H1 (cell line): ENCODE measurements at regions of chr10 and their contacts with region 1.

Region 1: GRCh38 chr10:95693668-95694534 is at the start of gene TCTN3:
- DNase-seq: peak; percentile 95 to 97
- H3K4me3 ChIP-seq: peak within 1 kb of the TSS; percentile 65 to 98 (median 82)
- H3K27ac ChIP-seq: peak within 1 kb of the TSS; percentile 82
- H3K4me1 ChIP-seq: peaks cover 0 to 3% (median 1%) of the 10 kb centered on the region in 4 experiments; a peak in 2 of 7 replicates
- H3K27me3 ChIP-seq: no peaks in the 10 kb centered on the region
- CTCF ChIP-seq: peak; percentile 99 to 100 (median 99)
- EP300 ChIP-seq: peak in 1 of 2 experiments; percentile 79; a peak in 1 of 3 replicates
- POLR2A ChIP-seq: peak; percentile 64 to 90
- RAD21 ChIP-seq: peak; percentile 97 to 99
- total RNA-seq, gene TCTN3: 31.9 and 34.7 TPM in 2 replicates

Region 2: GRCh38 chr10:95664543-95664942 is 29.4 kb before region 1 on chr10:
- CTCF ChIA-PET with region 1: interaction called, 16 read pairs
- POLR2A ChIA-PET with region 1: interaction called, 3 read pairs
- DNase-seq: no peak
- H3K4me3 ChIP-seq: no peak overlapping the region
- H3K27ac ChIP-seq: no peak overlapping the region
- H3K4me1 ChIP-seq: no peaks in the 10 kb centered on the region
- H3K27me3 ChIP-seq: no peaks in the 10 kb centered on the region
- CTCF ChIP-seq: no peak
- EP300 ChIP-seq: no peak
- POLR2A ChIP-seq: no peak
- RAD21 ChIP-seq: no peak

Region 3: DNA sequence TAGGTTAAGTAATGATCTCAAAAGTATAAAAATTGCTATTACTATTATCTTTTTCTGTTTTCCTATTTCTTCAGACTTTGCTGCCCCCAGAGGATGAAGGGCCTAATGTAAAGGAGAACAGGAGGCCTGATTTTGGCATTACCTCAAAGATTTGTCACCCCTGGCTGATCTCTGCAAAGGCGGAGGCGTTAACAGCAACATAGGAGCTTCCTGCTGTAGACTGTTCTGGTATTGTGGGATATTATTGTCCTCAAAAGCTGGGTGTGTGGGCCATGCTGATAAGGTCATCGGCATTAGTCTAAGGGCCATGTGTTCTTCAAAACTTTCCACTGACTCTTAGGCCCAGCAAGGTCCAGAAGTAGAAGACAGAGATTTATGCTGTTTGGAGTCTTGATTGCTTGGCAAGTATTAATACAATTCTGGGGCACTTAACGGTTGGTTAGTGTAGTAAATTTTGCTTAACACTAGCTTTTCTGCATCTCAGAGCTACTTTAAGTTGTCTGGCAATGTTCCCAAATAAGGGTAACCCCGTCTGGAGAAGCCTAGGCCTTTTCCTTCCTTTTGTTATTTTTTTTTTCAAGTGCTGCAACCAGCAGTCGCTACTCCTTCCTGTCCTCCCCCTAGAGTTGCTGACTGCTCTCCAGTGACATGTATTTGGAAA is 48.0 kb after region 1 on chr10:
- CTCF ChIA-PET with region 1: interaction called, 10 read pairs
- POLR2A ChIA-PET with region 1: no interaction called
- DNase-seq: no peak
- H3K4me3 ChIP-seq: no peak overlapping the region
- H3K27ac ChIP-seq: no peak overlapping the region
- H3K4me1 ChIP-seq: no peaks in the 10 kb centered on the region
- H3K27me3 ChIP-seq: no peaks in the 10 kb centered on the region
- CTCF ChIP-seq: peak in 1 of 3 experiments; percentile 23; a peak in 1 of 4 replicates
- EP300 ChIP-seq: no peak
- POLR2A ChIP-seq: no peak
- RAD21 ChIP-seq: no peak

Region 4: GRCh38 chr10:95784279-95784913 is 90.5 kb after region 1 on chr10:
- CTCF ChIA-PET with region 1: interaction called, 10 read pairs
- POLR2A ChIA-PET with region 1: no interaction called
- DNase-seq: no peak
- H3K4me3 ChIP-seq: no peak overlapping the region
- H3K27ac ChIP-seq: no peak overlapping the region
- H3K4me1 ChIP-seq: no peaks in the 10 kb centered on the region; a peak in 1 of 7 replicates
- H3K27me3 ChIP-seq: no peaks in the 10 kb centered on the region
- CTCF ChIP-seq: no peak
- EP300 ChIP-seq: no peak
- POLR2A ChIP-seq: no peak
- RAD21 ChIP-seq: no peak

Region 5: DNA sequence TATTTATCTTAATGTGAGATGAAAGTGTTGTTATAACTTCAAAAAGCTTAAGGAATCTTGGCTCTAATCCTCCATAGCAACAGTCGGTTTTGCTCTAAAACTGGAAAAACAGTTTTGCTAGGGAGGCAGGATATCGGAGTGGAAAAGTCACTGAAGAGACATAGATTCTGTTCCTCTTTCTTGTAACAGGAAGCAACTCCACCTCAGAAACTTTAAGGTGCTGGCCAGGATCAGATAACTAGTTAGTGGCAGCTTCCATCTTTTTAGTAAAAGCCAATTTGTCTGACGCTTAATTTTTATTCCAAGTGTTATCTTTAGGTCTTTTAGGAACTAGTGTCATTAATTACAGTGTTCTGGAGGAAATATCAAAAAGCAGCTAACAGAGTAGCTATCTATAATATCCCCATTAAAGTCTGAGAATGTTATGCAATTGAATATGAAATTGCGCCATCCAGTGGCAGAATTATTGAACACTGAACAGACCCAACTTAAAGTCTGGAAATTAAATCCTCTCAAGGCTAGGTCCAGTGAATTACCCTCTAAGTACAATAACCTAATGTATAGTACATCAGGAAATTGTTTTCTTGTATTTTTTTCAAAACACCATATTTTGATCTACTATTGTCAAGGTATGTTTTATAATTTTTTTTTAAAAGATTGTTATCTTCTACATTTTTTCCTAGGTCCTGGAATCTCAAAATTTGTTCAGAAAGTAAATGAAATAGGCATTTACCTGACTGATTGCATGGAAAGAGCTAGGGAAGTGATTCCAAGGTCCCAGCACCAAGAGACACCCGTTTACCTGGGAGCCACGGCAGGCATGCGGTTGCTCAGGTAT is 148.0 kb after region 1 on chr10:
- CTCF ChIA-PET with region 1: interaction called, 238 read pairs
- POLR2A ChIA-PET with region 1: interaction called, 6 read pairs
- DNase-seq: peak in 1 of 2 experiments; percentile 15
- H3K4me3 ChIP-seq: no peak overlapping the region
- H3K27ac ChIP-seq: no peak overlapping the region
- H3K4me1 ChIP-seq: peaks cover 0 to 4% (median 2%) of the 10 kb centered on the region in 4 experiments; a peak in 2 of 7 replicates
- H3K27me3 ChIP-seq: no peaks in the 10 kb centered on the region
- CTCF ChIP-seq: peak in 2 of 3 experiments; percentile 54 to 58; a peak in 2 of 4 replicates
- EP300 ChIP-seq: no peak
- POLR2A ChIP-seq: no peak
- RAD21 ChIP-seq: peak; percentile 77 to 78

Region 6: DNA sequence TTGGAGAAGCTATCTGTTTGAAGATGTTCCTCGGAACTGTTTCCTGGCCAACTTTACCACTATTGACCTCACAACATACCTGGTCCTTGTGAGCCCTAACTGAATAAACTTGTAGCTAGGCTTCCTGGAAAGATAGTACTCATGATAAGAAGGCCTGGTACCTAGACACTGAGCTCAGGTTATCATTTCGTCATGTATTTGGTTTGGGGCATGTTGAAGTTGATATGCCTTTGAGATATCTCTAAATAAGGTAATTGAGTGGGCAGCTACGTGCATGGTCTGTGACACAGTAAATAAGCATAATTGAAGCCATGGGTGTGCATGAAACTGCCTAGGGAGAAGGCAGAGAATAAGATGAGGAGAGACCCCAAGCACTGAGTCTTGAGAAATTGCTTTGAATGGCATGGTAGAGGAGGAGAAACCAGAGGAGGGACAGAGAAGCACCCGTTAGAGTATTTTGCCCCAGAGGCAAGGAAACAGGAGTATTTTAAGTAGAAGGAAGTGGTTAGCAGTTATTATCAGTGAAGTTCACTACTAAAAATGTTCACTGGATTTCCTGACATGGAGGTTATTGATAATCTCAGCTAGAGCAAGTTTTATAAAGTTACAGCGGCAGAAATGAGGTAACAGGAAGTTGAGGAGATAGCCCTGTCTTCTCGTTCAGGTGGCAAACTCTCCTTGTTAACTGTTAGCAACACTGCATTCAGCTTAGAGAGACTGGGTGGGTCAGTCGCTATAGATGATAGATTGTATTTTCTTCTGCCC is 269.5 kb after region 1 on chr10:
- CTCF ChIA-PET with region 1: no interaction called
- POLR2A ChIA-PET with region 1: no interaction called
- DNase-seq: no peak
- H3K4me3 ChIP-seq: no peak overlapping the region
- H3K27ac ChIP-seq: no peak overlapping the region
- H3K4me1 ChIP-seq: no peaks in the 10 kb centered on the region
- H3K27me3 ChIP-seq: no peaks in the 10 kb centered on the region; a peak in 1 of 7 replicates
- CTCF ChIP-seq: no peak
- EP300 ChIP-seq: no peak
- POLR2A ChIP-seq: no peak
- RAD21 ChIP-seq: no peak